Caco-2 (cell line): ENCODE measurements at regions of chr14 and their contacts with region 1.

Region 1: DNA sequence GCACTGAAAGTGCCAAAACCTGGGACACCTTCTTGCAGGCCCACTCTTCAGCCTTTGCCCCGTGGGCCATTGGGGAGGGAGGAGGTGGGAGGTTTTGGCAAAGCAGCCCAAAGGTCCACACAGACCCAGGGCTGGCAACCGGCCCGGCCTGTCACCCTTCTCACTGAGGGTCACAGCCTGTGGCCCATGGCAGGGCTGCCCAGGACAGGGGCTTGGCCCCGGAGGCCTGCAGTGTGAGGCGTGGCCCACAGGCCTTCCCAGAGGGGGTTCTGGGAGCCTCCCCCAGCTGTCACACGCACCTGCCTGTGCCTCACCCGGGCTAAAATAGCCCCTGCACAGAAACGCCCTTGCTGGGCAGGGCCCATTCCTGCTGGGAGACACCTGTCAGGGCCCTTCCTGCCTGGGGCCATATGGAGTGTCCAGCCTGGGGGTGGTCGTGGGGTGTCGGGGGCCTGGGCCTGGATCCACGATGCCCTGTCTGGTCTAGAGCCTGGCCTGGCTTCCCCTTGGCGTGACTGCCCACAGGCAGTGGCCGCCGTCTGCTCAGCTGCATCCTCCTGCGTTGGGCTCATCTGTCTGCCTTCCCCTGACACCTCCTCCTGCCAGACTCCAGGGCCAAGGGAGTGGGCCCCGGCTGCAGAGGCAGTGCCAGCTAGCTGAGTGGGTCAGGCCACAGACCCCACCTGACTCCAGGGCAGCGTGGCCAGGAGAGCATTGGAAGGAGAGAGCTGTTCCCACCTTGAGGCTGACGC is 19.2 kb downstream of the PACS2 start:
- DNase-seq: no peak
- H3K4me3 ChIP-seq: no peak overlapping the region
- H3K4me3 Mint-ChIP-seq: no peak overlapping the region
- H3K27ac Mint-ChIP-seq: no peak overlapping the region
- H3K4me1 ChIP-seq: no peaks in the 10 kb centered on the region
- H3K4me1 Mint-ChIP-seq: no peaks in the 10 kb centered on the region
- H3K27me3 ChIP-seq: no peaks in the 10 kb centered on the region
- H3K27me3 Mint-ChIP-seq: no peaks in the 10 kb centered on the region
- CTCF ChIP-seq: no peak

Region 2: GRCh38 chr14:105203057-105203531 is 130.7 kb before region 1 on chr14:
- CTCF ChIA-PET with region 1: interaction called, 4 read pairs
- POLR2A ChIA-PET with region 1: no interaction called
- intact Hi-C with region 1: loop called (anchors 1 kb)
- DNase-seq: peak; percentile 74 to 87
- H3K4me3 ChIP-seq: no peak overlapping the region
- H3K4me3 Mint-ChIP-seq: no peak overlapping the region
- H3K27ac Mint-ChIP-seq: no peak overlapping the region
- H3K4me1 ChIP-seq: 0 out of 2 replicates have a peak, but pooled peaks cover 3% of the 10 kb centered on the region
- H3K4me1 Mint-ChIP-seq: peaks cover 6% of the 10 kb centered on the region
- H3K27me3 ChIP-seq: no peaks in the 10 kb centered on the region
- H3K27me3 Mint-ChIP-seq: peaks cover 4% of the 10 kb centered on the region
- CTCF ChIP-seq: peak; percentile 91 to 93

Region 3: DNA sequence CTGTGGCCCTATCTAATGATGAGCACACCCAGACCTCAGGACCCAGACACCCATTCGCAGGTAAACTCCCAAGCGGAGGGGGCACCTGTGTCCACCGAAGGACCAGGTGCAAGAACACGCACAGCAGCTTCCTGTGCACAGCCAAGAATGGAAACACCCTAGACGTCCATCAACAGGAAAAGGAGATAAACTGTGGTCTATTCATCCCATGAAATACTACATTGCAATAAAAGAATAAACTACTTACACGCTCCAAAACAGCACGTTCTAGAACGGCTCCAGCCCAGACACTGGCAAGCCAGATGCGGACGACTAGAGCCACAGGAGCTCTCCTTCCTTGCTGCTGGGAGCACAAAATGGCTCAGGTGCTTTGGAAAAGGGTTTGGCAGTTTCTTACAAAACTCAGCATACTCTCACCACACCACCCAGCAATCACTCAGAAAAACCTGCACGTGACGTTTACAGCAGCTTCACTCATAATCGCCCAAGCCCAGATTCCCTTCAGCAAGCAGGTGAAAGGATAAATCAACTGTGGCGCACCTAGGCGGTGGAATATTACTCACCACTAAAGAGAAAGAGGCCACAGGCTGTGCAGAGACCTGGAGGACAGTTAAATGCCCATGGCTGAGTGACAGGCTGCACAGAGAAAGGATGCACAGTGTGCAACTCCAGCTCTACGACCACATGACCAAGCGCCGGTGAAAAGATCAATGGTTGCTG is 54.0 kb before region 1 on chr14:
- CTCF ChIA-PET with region 1: no interaction called
- POLR2A ChIA-PET with region 1: no interaction called
- intact Hi-C with region 1: no loop called
- DNase-seq: no peak
- H3K4me3 ChIP-seq: no peak overlapping the region
- H3K4me3 Mint-ChIP-seq: no peak overlapping the region
- H3K27ac Mint-ChIP-seq: no peak overlapping the region
- H3K4me1 ChIP-seq: no peaks in the 10 kb centered on the region
- H3K4me1 Mint-ChIP-seq: no peaks in the 10 kb centered on the region
- H3K27me3 ChIP-seq: no peaks in the 10 kb centered on the region
- H3K27me3 Mint-ChIP-seq: no peaks in the 10 kb centered on the region
- CTCF ChIP-seq: no peak

Region 4: GRCh38 chr14:105300792-105301533 is 32.8 kb before region 1 on chr14 and contains the start of gene BRF1:
- CTCF ChIA-PET with region 1: interaction called, 19 read pairs
- POLR2A ChIA-PET with region 1: no interaction called
- intact Hi-C with region 1: no loop called
- DNase-seq: peak; percentile 98 to 99
- H3K4me3 ChIP-seq: peak within 1 kb of the TSS; percentile 100
- H3K4me3 Mint-ChIP-seq: peak within 1 kb of the TSS; percentile 79
- H3K27ac Mint-ChIP-seq: peak within 1 kb of the TSS; percentile 40
- H3K4me1 ChIP-seq: no peaks in the 10 kb centered on the region
- H3K4me1 Mint-ChIP-seq: peaks cover 7% of the 10 kb centered on the region
- H3K27me3 ChIP-seq: no peaks in the 10 kb centered on the region
- H3K27me3 Mint-ChIP-seq: no peaks in the 10 kb centered on the region
- CTCF ChIP-seq: no peak
- total RNA-seq, gene BRF1: 41.6 and 43.6 TPM in 2 replicates

Region 5: DNA sequence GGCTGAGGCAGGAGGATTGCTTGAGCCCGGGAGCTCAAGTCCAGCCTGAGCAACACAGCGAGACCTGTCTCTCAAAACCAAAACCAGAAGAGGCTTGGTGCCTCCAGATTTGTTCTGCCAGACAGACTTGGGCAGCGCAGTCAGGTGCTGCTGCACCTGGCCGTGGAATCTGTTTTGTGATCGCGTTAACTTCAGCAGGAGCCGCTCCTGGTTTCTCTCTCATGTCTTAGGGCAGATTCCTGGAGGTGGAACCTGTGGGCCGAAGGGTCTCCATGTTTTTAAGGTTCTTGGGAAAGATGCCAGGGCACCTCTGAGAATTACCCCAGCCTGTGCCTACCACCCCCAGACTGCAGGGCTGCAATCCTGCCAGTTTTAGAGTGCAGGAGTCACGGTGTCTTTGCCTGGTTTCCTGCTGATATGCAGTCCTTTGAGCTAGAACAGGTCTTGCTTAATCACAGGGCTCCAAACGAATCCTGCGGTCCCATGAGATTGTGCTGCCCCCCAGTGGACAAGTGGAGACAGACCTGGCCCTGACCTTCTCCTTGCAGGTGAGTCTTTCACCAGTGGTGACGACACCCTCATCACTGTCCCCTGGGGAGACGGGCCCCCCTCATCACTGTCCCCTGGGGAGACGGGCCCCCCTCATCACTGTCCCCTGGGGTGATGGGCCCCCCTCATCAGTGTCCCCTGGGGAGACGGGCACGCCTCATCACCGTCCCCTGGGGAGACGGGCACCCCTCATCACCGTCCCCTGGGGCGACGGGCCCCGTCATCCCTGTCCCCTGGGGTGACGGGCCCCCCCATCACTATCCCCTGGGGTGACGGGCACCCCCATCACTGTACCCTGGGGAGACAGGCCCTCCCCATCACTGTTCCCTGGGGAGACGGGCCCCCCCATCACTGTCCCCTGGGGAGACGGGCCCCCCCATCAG is 18.4 kb after region 1 on chr14:
- CTCF ChIA-PET with region 1: interaction called, 10 read pairs
- POLR2A ChIA-PET with region 1: no interaction called
- intact Hi-C with region 1: loop called (anchors 1 kb)
- DNase-seq: peak; percentile 85 to 91
- H3K4me3 ChIP-seq: no peak overlapping the region
- H3K4me3 Mint-ChIP-seq: no peak overlapping the region
- H3K27ac Mint-ChIP-seq: no peak overlapping the region
- H3K4me1 ChIP-seq: no peaks in the 10 kb centered on the region
- H3K4me1 Mint-ChIP-seq: no peaks in the 10 kb centered on the region
- H3K27me3 ChIP-seq: no peaks in the 10 kb centered on the region
- H3K27me3 Mint-ChIP-seq: no peaks in the 10 kb centered on the region
- CTCF ChIP-seq: peak; percentile 79 to 83